OCI-LY7 (cell line): ENCODE measurements at regions of chr2 and their contacts with region 1.

Region 1: DNA sequence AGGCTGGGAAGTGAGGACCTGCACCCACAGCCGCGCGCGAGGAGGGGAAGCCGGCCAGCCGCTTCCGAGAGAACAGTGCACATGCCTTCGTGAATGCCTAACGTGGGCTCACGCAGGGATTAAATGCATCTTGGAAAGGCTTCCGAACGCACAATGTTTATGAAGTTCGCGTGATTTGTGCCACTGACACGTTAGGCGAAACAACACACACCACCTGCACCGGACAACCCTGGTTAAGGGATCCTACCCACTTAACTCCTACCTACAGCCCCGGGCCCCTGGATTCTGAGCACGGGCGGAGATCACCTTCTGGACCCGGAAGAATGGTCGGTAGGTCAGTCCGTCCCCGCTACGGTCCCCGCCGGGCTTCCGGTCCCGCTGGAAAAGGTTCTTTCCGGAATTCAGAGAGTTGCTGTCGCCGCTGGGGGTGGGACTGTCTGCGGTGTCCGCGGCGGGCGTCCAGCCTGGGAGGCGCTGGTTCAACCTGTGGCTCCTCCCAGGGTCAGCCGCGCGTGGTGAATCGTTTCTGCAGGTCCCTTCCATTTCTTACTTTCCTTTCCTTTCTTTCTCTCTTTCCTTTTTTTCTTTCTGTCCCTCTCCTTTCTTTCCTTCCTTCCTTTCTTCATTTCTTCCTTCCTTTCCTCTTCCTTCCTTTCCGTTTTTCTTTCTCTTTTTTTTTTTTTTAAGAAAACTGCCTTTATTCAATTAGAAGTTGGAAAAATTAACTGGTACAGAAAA is at the start of gene MTIF2:
- DNase-seq: peak; percentile 93
- H3K4me3 ChIP-seq: peak within 1 kb of the TSS; percentile 85
- H3K27ac ChIP-seq: peak within 1 kb of the TSS; percentile 66
- H3K4me1 ChIP-seq: peaks cover 9% of the 10 kb centered on the region
- CTCF ChIP-seq: 0 out of 2 replicates have a peak, but pooled peaks have one; percentile 25
- total RNA-seq, gene MTIF2: 33.5 and 41.4 TPM in 2 replicates

Region 2: DNA sequence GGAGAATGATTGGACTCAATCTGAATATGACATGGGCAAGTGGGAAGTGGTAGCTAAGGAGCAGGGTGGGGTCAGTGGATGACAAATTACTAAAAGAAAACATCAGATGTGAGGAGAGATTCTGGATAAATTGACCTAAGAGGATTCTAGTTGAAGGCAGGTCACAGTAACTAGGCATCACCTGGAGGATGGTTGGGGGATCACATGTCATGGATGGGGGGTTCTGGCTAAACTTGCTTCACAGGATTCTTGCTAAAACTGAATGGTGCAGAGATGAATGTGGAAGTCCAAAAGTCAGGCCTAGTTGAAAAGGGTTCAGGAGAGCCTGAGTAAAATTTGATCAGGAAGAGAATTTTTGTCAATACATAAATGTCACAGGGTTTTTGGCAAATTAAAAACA is 55.3 kb before region 1 on chr2:
- CTCF ChIA-PET with region 1: interaction called, 12 read pairs
- POLR2A ChIA-PET with region 1: interaction called, 3 read pairs
- intact Hi-C with region 1: no loop called
- DNase-seq: no peak
- H3K4me3 ChIP-seq: no peak overlapping the region
- H3K27ac ChIP-seq: no peak overlapping the region
- H3K4me1 ChIP-seq: no peaks in the 10 kb centered on the region
- CTCF ChIP-seq: no peak

Region 3: GRCh38 chr2:55311444-55311870 is 42.4 kb after region 1 on chr2:
- CTCF ChIA-PET with region 1: no interaction called
- POLR2A ChIA-PET with region 1: no interaction called
- intact Hi-C with region 1: no loop called
- DNase-seq: peak; percentile 8
- H3K4me3 ChIP-seq: no peak overlapping the region
- H3K27ac ChIP-seq: no peak overlapping the region
- H3K4me1 ChIP-seq: no peaks in the 10 kb centered on the region
- CTCF ChIP-seq: peak; percentile 42; the same call in 1 of the 2 replicates

Region 4: GRCh38 chr2:55345064-55345463 is 76.0 kb after region 1 on chr2:
- CTCF ChIA-PET with region 1: no interaction called
- POLR2A ChIA-PET with region 1: no interaction called
- intact Hi-C with region 1: no loop called
- DNase-seq: no peak
- H3K4me3 ChIP-seq: no peak overlapping the region
- H3K27ac ChIP-seq: no peak overlapping the region
- H3K4me1 ChIP-seq: no peaks in the 10 kb centered on the region
- CTCF ChIP-seq: no peak

Region 5: DNA sequence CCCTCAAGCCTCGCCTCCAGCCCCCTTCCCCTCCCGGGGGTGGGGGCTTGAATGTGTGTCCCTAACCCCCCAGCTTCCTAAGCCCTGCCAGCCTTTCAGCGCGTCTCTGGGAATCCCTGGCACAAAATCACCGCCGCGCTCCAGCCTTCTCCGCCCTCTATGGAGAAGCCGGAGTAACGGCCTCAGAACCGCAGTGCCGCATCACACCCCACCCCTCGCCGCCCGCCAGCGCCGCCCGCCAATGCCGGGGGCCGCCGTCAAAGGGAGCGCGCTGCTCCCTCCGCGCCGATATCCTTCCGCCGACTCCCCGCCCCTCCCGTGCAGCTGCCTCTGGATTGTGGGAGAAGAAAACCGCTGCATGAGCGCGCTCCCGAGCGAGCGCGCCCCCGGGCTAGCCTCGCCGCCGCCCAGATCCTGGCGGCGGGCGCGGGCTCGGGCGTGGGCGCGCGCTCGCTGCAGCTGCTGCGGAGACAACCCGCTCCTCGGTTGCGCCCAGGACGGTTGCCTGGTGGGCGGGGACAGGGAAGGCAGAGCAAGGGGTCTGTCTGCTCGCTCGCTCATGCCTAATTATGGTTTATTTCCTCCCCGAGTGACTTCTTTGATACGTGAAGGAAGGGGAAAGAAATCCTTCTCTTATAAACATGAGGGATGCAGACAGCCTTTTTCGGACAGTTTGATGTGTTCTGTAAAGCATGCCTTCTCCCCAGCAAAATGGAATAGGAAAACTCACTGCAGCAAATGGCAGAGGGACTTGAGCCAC is 150.8 kb after region 1 on chr2 and contains the start of gene CCDC88A:
- CTCF ChIA-PET with region 1: no interaction called
- POLR2A ChIA-PET with region 1: interaction called, 3 read pairs
- intact Hi-C with region 1: loop called (anchors 1 kb)
- DNase-seq: peak; percentile 96
- H3K4me3 ChIP-seq: peak within 1 kb of the TSS; percentile 81
- H3K27ac ChIP-seq: peak within 1 kb of the TSS; percentile 73
- H3K4me1 ChIP-seq: peaks cover 48% of the 10 kb centered on the region
- CTCF ChIP-seq: peak; percentile 41; the same call in 1 of the 2 replicates
- total RNA-seq, gene CCDC88A: 98.4 and 109 TPM in 2 replicates

Region 6: GRCh38 chr2:55617175-55618024 is 348.3 kb after region 1 on chr2 and contains the start of gene PPP4R3B:
- CTCF ChIA-PET with region 1: no interaction called
- POLR2A ChIA-PET with region 1: no interaction called
- intact Hi-C with region 1: loop called (anchors 1 kb)
- DNase-seq: peak; percentile 99
- H3K4me3 ChIP-seq: peak within 1 kb of the TSS; percentile 96
- H3K27ac ChIP-seq: peak within 1 kb of the TSS; percentile 77
- H3K4me1 ChIP-seq: peaks cover 27% of the 10 kb centered on the region
- CTCF ChIP-seq: 0 out of 2 replicates have a peak, but pooled peaks have one; percentile 20
- total RNA-seq, gene PPP4R3B: 42.3 and 44.9 TPM in 2 replicates